Activated B cell treated with CpG ODN at 0.5 μM for 24 hours (primary cell): ENCODE measurements at regions of chr12 and their contacts with region 1.

Region 1: DNA sequence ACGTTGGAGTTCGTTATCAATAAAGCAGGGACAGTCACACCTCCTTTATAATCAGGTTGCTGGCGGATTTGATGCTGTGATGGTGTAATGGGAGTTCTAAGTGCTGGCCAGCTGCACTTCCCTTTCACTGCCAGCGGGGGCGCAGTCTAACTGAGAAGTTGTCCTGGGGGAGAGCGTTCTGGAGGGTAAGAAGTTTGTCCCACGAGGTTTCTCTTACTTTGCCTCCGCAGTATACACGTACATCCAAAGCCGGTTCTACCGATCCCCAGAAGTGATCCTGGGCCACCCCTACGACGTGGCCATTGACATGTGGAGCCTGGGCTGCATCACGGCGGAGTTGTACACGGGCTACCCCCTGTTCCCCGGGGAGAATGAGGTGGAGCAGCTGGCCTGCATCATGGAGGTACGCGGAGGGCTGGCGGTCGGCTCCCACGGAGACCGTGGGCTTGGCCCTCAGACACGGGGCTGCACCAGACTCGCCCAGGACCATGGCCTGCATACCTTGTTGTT is 42.7 kb downstream of the DYRK4 start:
- DNase-seq: peak; percentile 66
- ATAC-seq: peak; percentile 97
- H3K4me3 Mint-ChIP-seq: peak overlapping the region; percentile 98
- H3K27ac Mint-ChIP-seq: peak overlapping the region; percentile 91
- H3K4me1 Mint-ChIP-seq: peaks cover 19% of the 10 kb centered on the region
- H3K27me3 Mint-ChIP-seq: no peaks in the 10 kb centered on the region
- CTCF ChIP-seq: peak; percentile 84

Region 2: DNA sequence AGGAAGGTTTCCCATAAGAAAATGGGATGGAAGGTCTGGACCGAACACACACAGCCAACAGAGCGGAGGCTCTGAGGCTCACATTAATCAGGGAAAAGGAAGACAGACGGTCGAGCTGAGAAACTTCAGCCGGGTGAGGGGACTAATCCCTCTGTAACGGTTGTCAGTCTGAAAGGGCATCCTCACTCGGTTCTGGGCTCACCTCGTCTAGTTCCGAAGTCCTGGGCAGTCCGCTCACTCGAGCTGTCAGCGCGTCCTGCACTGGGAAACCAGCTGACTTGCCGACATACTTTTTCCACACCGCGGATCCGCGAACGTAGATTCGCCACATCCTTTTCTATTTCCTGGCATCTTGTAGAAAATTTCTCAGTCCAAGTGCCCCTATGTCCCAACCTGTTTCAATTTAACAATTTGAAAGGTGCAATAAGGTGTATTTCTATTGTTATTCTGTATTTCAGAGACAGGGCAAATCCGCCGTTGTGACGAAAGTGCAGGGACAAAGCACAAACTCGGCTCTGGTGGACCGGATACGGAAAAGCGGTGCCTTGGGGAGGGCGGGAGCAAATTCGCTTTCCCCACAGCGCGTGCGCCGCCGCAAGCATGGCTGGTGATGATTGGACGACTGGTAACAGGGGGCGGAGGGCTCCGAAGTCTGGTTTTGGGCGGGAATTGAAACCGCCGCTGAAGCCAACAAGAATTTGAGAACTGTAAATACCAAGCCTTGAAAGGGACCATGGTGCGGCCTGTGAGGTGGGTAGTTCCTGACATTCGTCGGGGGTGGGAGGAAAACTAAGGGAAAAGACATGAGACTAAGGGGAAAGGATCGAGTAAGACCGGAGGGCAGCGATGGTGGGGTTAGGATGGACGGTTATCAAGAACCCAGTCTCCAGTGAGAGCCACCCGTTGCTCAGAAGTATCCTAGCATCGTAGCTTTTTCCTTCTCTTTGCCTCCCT is 66.3 kb before region 1 on chr12 and contains the start of gene RAD51AP1:
- CTCF ChIA-PET with region 1: interaction called, 5 read pairs
- POLR2A ChIA-PET with region 1: no interaction called
- intact Hi-C with region 1: loop called (anchors 1 kb)
- DNase-seq: peak; percentile 86
- ATAC-seq: peak; percentile 98
- H3K4me3 Mint-ChIP-seq: peak within 1 kb of the TSS; percentile 91
- H3K27ac Mint-ChIP-seq: peak within 1 kb of the TSS; percentile 99
- H3K4me1 Mint-ChIP-seq: peaks cover 31% of the 10 kb centered on the region
- H3K27me3 Mint-ChIP-seq: no peaks in the 10 kb centered on the region
- CTCF ChIP-seq: no peak
- total RNA-seq, gene RAD51AP1: 5.6 and 5.9 TPM in 2 replicates

Region 3: GRCh38 chr12:4648501-4649357 is 44.0 kb after region 1 on chr12 and contains the starts of genes AKAP3 and NDUFA9:
- CTCF ChIA-PET with region 1: interaction called, 8 read pairs
- POLR2A ChIA-PET with region 1: interaction called, 9 read pairs
- intact Hi-C with region 1: loop called (anchors 1 kb)
- DNase-seq: peak; percentile 67
- ATAC-seq: peak; percentile 94
- H3K4me3 Mint-ChIP-seq: peak within 1 kb of the TSS; percentile 89
- H3K27ac Mint-ChIP-seq: peak within 1 kb of the TSS; percentile 88
- H3K4me1 Mint-ChIP-seq: peaks cover 49% of the 10 kb centered on the region
- H3K27me3 Mint-ChIP-seq: no peaks in the 10 kb centered on the region
- CTCF ChIP-seq: no peak
- total RNA-seq, gene AKAP3: 3.4 and 3.7 TPM in 2 replicates
- total RNA-seq, gene NDUFA9: 108 and 125 TPM in 2 replicates

Region 4: DNA sequence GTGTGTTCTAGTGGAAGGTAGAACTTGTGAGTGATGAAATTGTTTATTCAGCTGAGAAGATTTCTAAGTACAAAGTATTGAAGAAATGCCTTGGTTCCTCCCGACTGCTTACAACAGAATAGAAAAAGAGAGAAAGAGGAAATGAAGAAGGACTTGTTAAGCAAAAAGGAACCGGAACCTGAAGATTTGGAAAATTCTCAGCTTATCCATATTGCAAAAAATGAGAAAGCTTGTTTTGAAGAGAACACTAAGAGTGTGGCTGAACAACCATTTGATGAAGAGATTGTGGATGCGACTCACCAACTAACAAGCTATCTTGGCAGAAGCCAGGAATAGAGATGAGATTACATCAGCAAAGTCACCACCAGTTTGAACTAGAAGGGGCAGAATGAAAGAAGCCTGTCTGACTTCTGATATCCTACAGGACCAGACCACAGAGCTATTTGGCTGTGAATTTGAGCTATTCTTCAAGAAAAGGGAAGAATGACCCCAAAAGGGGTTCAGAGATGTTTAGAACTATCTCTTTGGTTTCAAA is 59.3 kb after region 1 on chr12:
- CTCF ChIA-PET with region 1: no interaction called
- POLR2A ChIA-PET with region 1: no interaction called
- intact Hi-C with region 1: no loop called
- DNase-seq: no peak
- ATAC-seq: no peak
- H3K4me3 Mint-ChIP-seq: no peak overlapping the region
- H3K27ac Mint-ChIP-seq: no peak overlapping the region
- H3K4me1 Mint-ChIP-seq: no peaks in the 10 kb centered on the region
- H3K27me3 Mint-ChIP-seq: no peaks in the 10 kb centered on the region
- CTCF ChIP-seq: no peak

Region 5: DNA sequence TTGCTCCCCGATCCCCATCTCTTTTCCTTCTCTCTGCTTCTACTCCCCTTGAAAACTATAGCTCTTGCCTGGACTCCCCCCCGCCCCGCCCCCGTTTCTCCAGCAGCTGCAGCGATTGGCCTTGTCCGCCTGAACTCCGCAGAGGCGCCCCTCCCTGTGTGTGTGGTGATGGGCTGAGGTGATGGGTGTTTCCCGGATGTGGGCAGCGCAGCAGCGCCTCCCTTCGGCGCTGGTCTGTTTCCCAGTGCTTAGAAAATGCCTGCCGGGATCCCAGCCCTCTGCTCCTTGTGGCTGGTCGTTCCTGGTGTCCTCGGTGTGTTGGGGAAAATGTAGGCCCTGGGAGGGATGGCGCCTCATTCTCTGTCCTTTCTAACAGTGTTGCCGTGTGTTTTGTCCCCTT is 158.8 kb after region 1 on chr12:
- CTCF ChIA-PET with region 1: interaction called, 3 read pairs
- POLR2A ChIA-PET with region 1: interaction called, 6 read pairs
- intact Hi-C with region 1: loop called (anchors 1 kb)
- DNase-seq: no peak
- ATAC-seq: no peak
- H3K4me3 Mint-ChIP-seq: no peak overlapping the region
- H3K27ac Mint-ChIP-seq: no peak overlapping the region
- H3K4me1 Mint-ChIP-seq: peaks cover 2% of the 10 kb centered on the region
- H3K27me3 Mint-ChIP-seq: no peaks in the 10 kb centered on the region
- CTCF ChIP-seq: no peak

Region 6: GRCh38 chr12:4829161-4829792 is 224.5 kb after region 1 on chr12:
- CTCF ChIA-PET with region 1: no interaction called
- POLR2A ChIA-PET with region 1: no interaction called
- intact Hi-C with region 1: loop called (anchors 2 kb)
- DNase-seq: no peak
- ATAC-seq: peak; percentile 87
- H3K4me3 Mint-ChIP-seq: peak overlapping the region; percentile 76
- H3K27ac Mint-ChIP-seq: peak overlapping the region; percentile 93
- H3K4me1 Mint-ChIP-seq: peaks cover 87% of the 10 kb centered on the region
- H3K27me3 Mint-ChIP-seq: no peaks in the 10 kb centered on the region
- CTCF ChIP-seq: no peak

Region 7: GRCh38 chr12:5123921-5124320 is 519.2 kb after region 1 on chr12:
- CTCF ChIA-PET with region 1: no interaction called
- POLR2A ChIA-PET with region 1: no interaction called
- intact Hi-C with region 1: no loop called
- DNase-seq: no peak
- ATAC-seq: no peak
- H3K4me3 Mint-ChIP-seq: no peak overlapping the region
- H3K27ac Mint-ChIP-seq: no peak overlapping the region
- H3K4me1 Mint-ChIP-seq: no peaks in the 10 kb centered on the region
- H3K27me3 Mint-ChIP-seq: peaks cover 4% of the 10 kb centered on the region
- CTCF ChIP-seq: no peak